PC-9 (cell line): ENCODE measurements at regions of chr12 and their contacts with region 1.

Region 1: DNA sequence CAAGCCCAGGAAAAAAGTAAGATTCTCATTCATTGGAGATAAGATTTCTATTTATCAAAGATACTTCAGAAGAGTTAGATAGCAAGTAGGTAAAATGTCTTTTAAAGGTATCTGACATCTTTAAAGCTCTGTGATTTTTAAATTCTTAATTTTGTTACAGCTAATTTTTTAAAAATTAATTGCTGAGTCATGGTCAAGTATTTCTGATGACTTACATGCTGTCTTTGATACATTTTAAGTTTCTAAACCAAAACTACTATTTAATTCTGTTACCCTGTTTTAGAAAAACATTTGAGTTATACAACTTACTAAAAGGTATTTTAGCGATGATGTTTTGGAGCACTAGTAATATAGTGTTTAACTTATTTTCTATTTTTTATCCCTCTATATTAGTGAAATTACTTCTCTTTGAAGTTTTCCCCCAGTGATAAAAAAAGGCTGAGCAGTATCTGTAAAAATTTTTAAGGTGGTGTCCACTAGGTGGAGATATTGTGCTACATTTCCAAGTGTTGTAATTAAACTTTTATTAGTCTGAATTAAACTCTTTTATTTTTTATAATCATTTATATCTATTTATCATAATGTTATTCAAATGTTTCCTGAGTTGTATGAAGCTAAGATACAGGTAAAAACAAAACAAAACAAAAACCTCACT is 11.5 kb downstream of the ALG10 start:
- DNase-seq: no peak
- H3K4me3 ChIP-seq: no peak overlapping the region
- H3K27ac ChIP-seq: peak overlapping the region; percentile 36
- H3K4me1 ChIP-seq: no peaks in the 10 kb centered on the region
- H3K27me3 ChIP-seq: no peaks in the 10 kb centered on the region
- CTCF ChIP-seq: peak; percentile 79

Region 2: GRCh38 chr12:34126239-34126641 is 92.5 kb after region 1 on chr12:
- CTCF ChIA-PET with region 1: no interaction called
- POLR2A ChIA-PET with region 1: no interaction called
- intact Hi-C with region 1: loop called (anchors 5 kb)
- DNase-seq: no peak
- H3K4me3 ChIP-seq: peak overlapping the region; percentile 29; the same call in 1 of the 2 replicates
- H3K27ac ChIP-seq: no peak overlapping the region
- H3K4me1 ChIP-seq: no peaks in the 10 kb centered on the region
- H3K27me3 ChIP-seq: no peaks in the 10 kb centered on the region
- CTCF ChIP-seq: no peak

Region 3: DNA sequence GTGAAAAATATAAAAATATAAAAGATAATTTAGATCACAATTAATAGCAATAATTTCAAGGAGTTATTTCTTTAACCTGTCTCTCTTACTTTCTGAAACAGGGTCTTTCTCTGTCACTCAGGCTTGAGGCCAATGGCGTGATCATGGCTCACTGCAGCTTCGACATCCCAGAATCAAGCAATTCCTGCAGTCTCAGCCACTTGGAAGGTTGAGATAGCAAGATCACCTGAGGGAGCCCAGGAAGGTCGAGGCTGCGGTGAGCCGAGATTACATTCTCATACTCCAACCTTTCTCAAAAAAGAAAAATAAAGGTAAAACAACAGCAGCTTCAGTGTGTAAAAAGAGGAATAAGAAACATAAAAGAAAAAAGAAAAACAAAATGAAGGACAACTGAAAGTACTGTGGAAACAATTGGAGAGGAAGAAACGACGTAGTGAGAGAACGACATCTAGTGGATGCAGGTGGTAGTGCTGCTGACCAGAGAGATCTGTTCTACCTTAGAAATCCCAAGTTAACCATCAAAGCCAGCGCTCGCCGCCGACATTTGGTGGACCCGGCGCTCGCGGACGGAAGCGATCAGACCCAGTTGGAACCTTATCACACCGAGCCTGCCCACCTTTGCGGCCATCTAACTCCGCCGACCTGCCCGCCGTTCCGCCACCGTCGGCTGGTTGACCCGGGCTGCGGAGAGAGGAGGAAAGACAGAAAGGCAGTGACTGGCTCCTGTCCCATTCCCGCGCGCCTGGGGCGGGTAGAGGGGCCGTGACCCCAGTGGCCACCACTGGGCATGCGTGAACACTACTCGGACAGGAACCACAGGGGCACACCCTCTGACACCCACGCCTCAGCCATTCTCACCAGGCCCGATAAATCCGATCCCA is 184.7 kb after region 1 on chr12:
- CTCF ChIA-PET with region 1: interaction called, 3 read pairs
- POLR2A ChIA-PET with region 1: no interaction called
- intact Hi-C with region 1: loop called (anchors 1 kb)
- DNase-seq: peak; percentile 64 to 73
- H3K4me3 ChIP-seq: peak overlapping the region; percentile 63; the same call in 1 of the 2 replicates
- H3K27ac ChIP-seq: no peak overlapping the region
- H3K4me1 ChIP-seq: no peaks in the 10 kb centered on the region
- H3K27me3 ChIP-seq: no peaks in the 10 kb centered on the region
- CTCF ChIP-seq: peak; percentile 91

Region 4: GRCh38 chr12:34292736-34293625 is 259.2 kb after region 1 on chr12:
- CTCF ChIA-PET with region 1: no interaction called
- POLR2A ChIA-PET with region 1: no interaction called
- intact Hi-C with region 1: loop called (anchors 5 kb)
- DNase-seq: peak in 1 of 2 experiments; percentile 37
- H3K4me3 ChIP-seq: no peak overlapping the region
- H3K27ac ChIP-seq: no peak overlapping the region
- H3K4me1 ChIP-seq: no peaks in the 10 kb centered on the region
- H3K27me3 ChIP-seq: peaks cover 63% of the 10 kb centered on the region
- CTCF ChIP-seq: peak; percentile 66

Region 5: DNA sequence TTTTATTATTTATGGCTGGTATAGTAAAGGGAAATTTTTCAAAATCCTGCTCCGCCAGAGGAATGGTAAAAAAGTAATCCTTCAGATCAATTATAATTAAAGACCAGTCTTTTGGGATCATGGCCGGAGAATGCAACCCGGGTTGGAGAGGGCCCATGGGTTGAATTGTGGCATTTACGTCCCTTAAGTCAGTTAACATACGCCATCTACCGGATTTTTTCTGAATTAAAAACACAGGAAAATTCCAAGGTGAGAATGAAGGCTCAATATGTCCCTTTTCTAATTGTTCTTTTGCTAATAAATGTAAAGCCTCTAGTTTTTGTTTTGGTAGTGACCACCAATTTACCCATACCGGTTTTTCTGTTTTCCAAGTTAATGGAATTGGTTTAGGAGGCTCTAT is 591.4 kb after region 1 on chr12:
- CTCF ChIA-PET with region 1: no interaction called
- POLR2A ChIA-PET with region 1: no interaction called
- intact Hi-C with region 1: loop called (anchors 2 kb)
- DNase-seq: peak in 1 of 2 experiments; percentile 35
- H3K4me3 ChIP-seq: no peak overlapping the region
- H3K27ac ChIP-seq: no peak overlapping the region
- H3K4me1 ChIP-seq: no peaks in the 10 kb centered on the region
- H3K27me3 ChIP-seq: no peaks in the 10 kb centered on the region
- CTCF ChIP-seq: peak; percentile 79